ENCODE measurements at regions of chr19 and their contacts with region 1.

Region 1: GRCh38 chr19:11798391-11799330 is at the start of gene ZNF491:
- DNase-seq: peak; percentile 59 to 88 (median 84)
- ATAC-seq: peak; percentile 98
- H3K4me3 ChIP-seq: peak within 1 kb of the TSS; percentile 68 to 79
- H3K4me3 Mint-ChIP-seq: peak within 1 kb of the TSS; percentile 89
- H3K27ac ChIP-seq: peak within 1 kb of the TSS; percentile 57 to 63
- H3K27ac Mint-ChIP-seq: peak within 1 kb of the TSS; percentile 91
- H3K4me1 ChIP-seq: peaks cover 12% of the 10 kb centered on the region
- H3K4me1 Mint-ChIP-seq: peaks cover 17% of the 10 kb centered on the region
- H3K27me3 ChIP-seq: no peaks in the 10 kb centered on the region
- H3K27me3 Mint-ChIP-seq: no peaks in the 10 kb centered on the region
- CTCF ChIP-seq: peak; percentile 23
- total RNA-seq, gene ZNF491: 0.43 to 0.89 TPM

Region 2: GRCh38 chr19:11738746-11739620 is 59.7 kb before region 1 on chr19 and contains the start of gene ZNF823:
- CTCF ChIA-PET with region 1: interaction called, 3 read pairs
- POLR2A ChIA-PET with region 1: no interaction called
- intact Hi-C with region 1: loop called in 1 of 2 experiments (anchors 2 kb)
- DNase-seq: peak; percentile 94 to 99 (median 97)
- ATAC-seq: peak; percentile 99
- H3K4me3 ChIP-seq: peak within 1 kb of the TSS; percentile 72 to 91
- H3K4me3 Mint-ChIP-seq: peak within 1 kb of the TSS; percentile 99
- H3K27ac ChIP-seq: peak within 1 kb of the TSS; percentile 52 to 54
- H3K27ac Mint-ChIP-seq: peak within 1 kb of the TSS; percentile 96
- H3K4me1 ChIP-seq: peaks cover 14% of the 10 kb centered on the region
- H3K4me1 Mint-ChIP-seq: peaks cover 32% of the 10 kb centered on the region
- H3K27me3 ChIP-seq: no peaks in the 10 kb centered on the region
- H3K27me3 Mint-ChIP-seq: no peaks in the 10 kb centered on the region
- CTCF ChIP-seq: no peak
- total RNA-seq, gene ZNF823: 2.8 to 4.3 TPM

Region 3: DNA sequence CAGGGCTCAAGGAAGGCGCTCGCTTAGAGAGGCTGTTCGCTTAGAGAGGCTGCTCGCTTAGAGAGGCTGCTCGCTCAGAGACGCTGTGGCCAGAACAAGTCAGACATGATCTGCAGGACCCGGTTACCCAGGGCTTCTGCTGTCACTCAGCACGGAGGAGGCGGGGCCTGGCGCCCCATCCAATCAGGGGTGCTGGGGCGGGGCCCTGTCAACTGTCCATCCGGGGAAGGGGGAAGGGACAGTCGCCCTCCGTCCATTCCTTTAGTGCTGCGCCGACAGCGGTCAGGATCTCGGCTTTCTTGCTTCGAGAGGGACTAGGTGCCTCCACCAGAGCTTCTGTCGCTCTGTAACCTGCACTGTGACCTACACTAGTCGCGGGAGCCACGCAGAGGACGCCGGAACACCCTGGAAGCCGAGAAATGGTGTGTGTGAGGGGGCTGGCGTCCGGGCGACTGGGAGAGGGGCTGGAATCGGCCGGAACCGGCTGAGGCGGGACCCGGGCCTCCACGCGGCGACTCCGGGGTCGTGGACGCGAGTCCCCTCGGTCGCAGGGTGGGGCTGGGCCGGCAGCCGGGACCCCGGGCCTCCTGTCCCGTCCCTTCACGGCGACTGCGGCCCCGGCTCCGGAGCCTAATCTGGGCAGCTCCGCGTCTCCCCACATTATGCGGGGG is 15.5 kb after region 1 on chr19 and contains the start of gene ZNF440:
- CTCF ChIA-PET with region 1: interaction called, 68 read pairs
- POLR2A ChIA-PET with region 1: interaction called, 5 read pairs
- intact Hi-C with region 1: loop called (anchors 1 kb)
- DNase-seq: peak; percentile 66 to 88 (median 79)
- ATAC-seq: peak; percentile 99
- H3K4me3 ChIP-seq: peak within 1 kb of the TSS; percentile 89 to 95
- H3K4me3 Mint-ChIP-seq: peak within 1 kb of the TSS; percentile 95
- H3K27ac ChIP-seq: peak within 1 kb of the TSS; percentile 45 to 51
- H3K27ac Mint-ChIP-seq: peak within 1 kb of the TSS; percentile 86
- H3K4me1 ChIP-seq: peaks cover 6% of the 10 kb centered on the region
- H3K4me1 Mint-ChIP-seq: peaks cover 32% of the 10 kb centered on the region
- H3K27me3 ChIP-seq: no peaks in the 10 kb centered on the region
- H3K27me3 Mint-ChIP-seq: no peaks in the 10 kb centered on the region
- CTCF ChIP-seq: no peak
- total RNA-seq, gene ZNF440: 6.4 to 7.9 TPM

Region 4: DNA sequence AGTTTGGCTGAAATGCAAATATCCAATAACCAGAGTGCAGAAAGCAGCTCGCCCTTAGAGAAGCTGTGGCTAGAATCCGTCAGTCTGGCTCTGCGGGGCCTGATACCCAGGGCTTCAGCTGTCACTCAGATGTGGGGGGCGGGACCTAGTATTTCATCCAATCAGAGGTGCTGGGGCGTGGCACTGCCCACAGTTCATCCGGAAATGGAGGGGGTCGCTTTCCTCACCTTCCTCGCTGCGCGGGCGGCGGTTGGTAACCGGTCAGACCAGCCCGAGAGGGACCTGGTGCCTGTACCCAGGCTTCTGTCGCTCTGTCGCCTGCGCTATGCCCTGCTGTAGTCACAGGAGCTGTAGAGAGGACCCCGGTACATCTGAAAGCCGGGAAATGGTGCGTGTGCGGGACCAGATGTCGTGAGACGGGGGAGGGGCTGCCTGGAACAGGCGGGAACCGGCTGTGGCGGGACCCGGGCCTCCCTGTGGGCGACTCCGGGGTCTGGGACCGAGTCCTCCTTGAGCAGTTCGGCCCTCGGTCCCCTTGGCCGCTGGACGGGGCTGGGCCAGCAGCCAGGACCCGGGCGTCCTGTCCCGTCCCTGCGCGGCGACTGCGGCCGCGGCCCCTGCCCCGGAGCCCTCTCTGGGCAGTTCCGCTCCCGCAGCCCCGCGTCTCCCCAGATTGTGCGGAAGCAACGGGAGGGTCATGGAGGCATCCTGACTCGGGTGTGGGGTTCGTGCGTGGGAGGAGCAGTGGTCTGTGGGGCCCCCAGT is 126.4 kb after region 1 on chr19 and contains the start of gene ZNF700:
- CTCF ChIA-PET with region 1: interaction called, 53 read pairs
- POLR2A ChIA-PET with region 1: interaction called, 6 read pairs
- intact Hi-C with region 1: loop called (anchors 1 kb)
- DNase-seq: peak; percentile 83 to 95 (median 92)
- ATAC-seq: peak; percentile 86
- H3K4me3 ChIP-seq: peak within 1 kb of the TSS; percentile 82 to 96
- H3K4me3 Mint-ChIP-seq: peak within 1 kb of the TSS; percentile 94
- H3K27ac ChIP-seq: peak within 1 kb of the TSS; percentile 85 to 86
- H3K27ac Mint-ChIP-seq: peak within 1 kb of the TSS; percentile 97
- H3K4me1 ChIP-seq: peaks cover 24% of the 10 kb centered on the region
- H3K4me1 Mint-ChIP-seq: peaks cover 53% of the 10 kb centered on the region
- H3K27me3 ChIP-seq: no peaks in the 10 kb centered on the region
- H3K27me3 Mint-ChIP-seq: no peaks in the 10 kb centered on the region
- CTCF ChIP-seq: no peak
- total RNA-seq, gene ZNF700: 10.8 to 10.9 TPM

Region 5: DNA sequence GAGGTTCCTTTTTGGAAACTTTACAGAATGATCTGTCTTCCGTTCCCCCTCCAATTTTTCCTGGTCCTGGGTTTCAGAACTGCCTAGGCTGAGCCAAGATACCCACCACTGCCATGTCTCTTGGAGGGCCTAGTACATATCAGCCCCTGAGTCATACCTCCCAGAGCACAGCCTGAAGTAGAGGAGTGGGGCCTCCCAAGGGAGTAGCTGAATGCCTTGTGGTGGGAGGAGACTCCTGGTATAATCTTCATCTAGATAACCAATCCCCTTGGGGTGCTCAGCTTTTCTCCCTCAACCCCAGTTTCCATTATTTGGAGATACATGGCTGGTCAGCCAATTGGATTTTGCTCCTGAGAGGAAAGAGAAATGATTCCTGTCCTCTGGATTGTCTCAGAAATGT is 196.5 kb after region 1 on chr19:
- CTCF ChIA-PET with region 1: interaction called, 28 read pairs
- POLR2A ChIA-PET with region 1: no interaction called
- intact Hi-C with region 1: no loop called
- DNase-seq: no peak
- ATAC-seq: no peak
- H3K4me3 ChIP-seq: no peak overlapping the region
- H3K4me3 Mint-ChIP-seq: no peak overlapping the region
- H3K27ac ChIP-seq: no peak overlapping the region
- H3K27ac Mint-ChIP-seq: no peak overlapping the region
- H3K4me1 ChIP-seq: peaks cover 8% of the 10 kb centered on the region
- H3K4me1 Mint-ChIP-seq: peaks cover 51% of the 10 kb centered on the region
- H3K27me3 ChIP-seq: no peaks in the 10 kb centered on the region
- H3K27me3 Mint-ChIP-seq: no peaks in the 10 kb centered on the region
- CTCF ChIP-seq: no peak

Region 6: GRCh38 chr19:12139885-12140547 is 341.4 kb after region 1 on chr19 and contains the start of gene ZNF20:
- CTCF ChIA-PET with region 1: interaction called, 36 read pairs
- POLR2A ChIA-PET with region 1: interaction called, 3 read pairs
- intact Hi-C with region 1: loop called (anchors 1 kb)
- DNase-seq: peak; percentile 71 to 92 (median 89)
- ATAC-seq: peak; percentile 86
- H3K4me3 ChIP-seq: peak within 1 kb of the TSS; percentile 85 to 94
- H3K4me3 Mint-ChIP-seq: peak within 1 kb of the TSS; percentile 84
- H3K27ac ChIP-seq: peak within 1 kb of the TSS; percentile 44 to 50
- H3K27ac Mint-ChIP-seq: peak within 1 kb of the TSS; percentile 67
- H3K4me1 ChIP-seq: peaks cover 16% of the 10 kb centered on the region
- H3K4me1 Mint-ChIP-seq: peaks cover 30% of the 10 kb centered on the region
- H3K27me3 ChIP-seq: no peaks in the 10 kb centered on the region
- H3K27me3 Mint-ChIP-seq: no peaks in the 10 kb centered on the region
- CTCF ChIP-seq: no peak
- total RNA-seq, gene ZNF20: 0.95 to 1.00 TPM